ENCODE measurements at regions of chr5 and their contacts with region 1.

Region 1: DNA sequence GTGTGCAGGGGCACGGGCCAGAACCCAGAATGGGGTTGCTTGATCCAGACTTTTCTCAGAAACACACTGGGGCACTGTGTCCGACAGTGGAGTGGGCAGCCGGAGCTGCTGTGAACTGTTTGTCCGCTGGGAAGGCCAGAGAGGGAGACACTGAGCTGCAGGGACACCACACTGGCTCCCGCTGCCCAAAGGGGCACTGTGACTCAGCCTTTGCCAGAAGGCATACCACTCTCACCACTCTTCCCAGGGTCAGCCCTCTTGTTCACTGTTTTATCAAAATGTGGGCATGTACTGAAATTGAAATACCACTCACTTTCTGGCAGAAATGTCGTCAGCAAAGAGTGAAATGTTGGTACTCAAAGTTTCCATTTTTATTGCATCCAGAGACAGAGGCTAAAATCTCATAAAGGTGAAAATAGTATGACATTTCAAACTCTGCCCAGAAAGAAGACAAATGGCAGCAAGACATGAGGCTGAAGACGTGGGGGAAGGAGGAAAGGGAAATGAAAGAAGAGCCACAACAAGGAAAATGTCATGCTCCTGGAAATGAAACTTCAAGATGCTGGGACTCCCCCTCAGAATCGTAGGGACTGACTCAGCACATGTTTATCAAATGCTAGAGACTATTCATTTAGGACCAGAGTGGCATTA is 4.5 kb upstream of the IL7R start:
- DNase-seq: peak; percentile 78
- H3K4me3 Mint-ChIP-seq: peak overlapping the region; percentile 91
- H3K27ac Mint-ChIP-seq: peak overlapping the region; percentile 100
- H3K4me1 Mint-ChIP-seq: peaks cover 63% of the 10 kb centered on the region
- H3K27me3 Mint-ChIP-seq: no peaks in the 10 kb centered on the region

Region 2: GRCh38 chr5:35003018-35003957 is 848.9 kb before region 1 on chr5:
- CTCF ChIA-PET with region 1: no interaction called
- intact Hi-C with region 1: no loop called
- DNase-seq: peak; percentile 76
- H3K4me3 Mint-ChIP-seq: no peak overlapping the region
- H3K27ac Mint-ChIP-seq: no peak overlapping the region
- H3K4me1 Mint-ChIP-seq: no peaks in the 10 kb centered on the region
- H3K27me3 Mint-ChIP-seq: peaks cover 16% of the 10 kb centered on the region

Region 3: GRCh38 chr5:35319333-35320002 is 532.7 kb before region 1 on chr5:
- CTCF ChIA-PET with region 1: no interaction called
- intact Hi-C with region 1: loop called (anchors 1 kb)
- DNase-seq: peak; percentile 94
- H3K4me3 Mint-ChIP-seq: no peak overlapping the region
- H3K27ac Mint-ChIP-seq: peak overlapping the region; percentile 24
- H3K4me1 Mint-ChIP-seq: peaks cover 14% of the 10 kb centered on the region
- H3K27me3 Mint-ChIP-seq: peaks cover 24% of the 10 kb centered on the region

Region 4: GRCh38 chr5:35430376-35431154 is 421.6 kb before region 1 on chr5:
- CTCF ChIA-PET with region 1: no interaction called
- intact Hi-C with region 1: no loop called
- DNase-seq: no peak
- H3K4me3 Mint-ChIP-seq: no peak overlapping the region
- H3K27ac Mint-ChIP-seq: no peak overlapping the region
- H3K4me1 Mint-ChIP-seq: no peaks in the 10 kb centered on the region
- H3K27me3 Mint-ChIP-seq: peaks cover 13% of the 10 kb centered on the region

Region 5: DNA sequence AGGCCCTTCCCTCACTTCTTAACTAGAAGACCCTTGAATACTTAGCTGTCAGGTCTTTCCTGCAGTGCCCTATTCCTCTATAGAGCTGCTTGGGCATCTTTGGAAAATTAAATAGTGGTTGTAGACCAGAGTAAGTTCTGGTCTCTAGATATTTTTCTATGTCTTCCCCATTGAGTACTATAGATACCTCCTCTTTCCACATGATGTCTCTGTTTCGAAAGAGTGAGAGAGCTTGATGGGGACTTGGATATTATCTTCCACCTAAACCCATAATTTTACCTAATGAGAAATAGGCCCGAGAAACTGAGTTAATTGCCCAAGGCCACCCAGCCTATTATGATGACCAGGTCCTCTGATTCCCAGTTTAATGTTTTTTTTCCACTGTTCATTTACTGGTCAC is 194.3 kb before region 1 on chr5:
- CTCF ChIA-PET with region 1: no interaction called
- intact Hi-C with region 1: loop called (anchors 2 kb)
- DNase-seq: no peak
- H3K4me3 Mint-ChIP-seq: no peak overlapping the region
- H3K27ac Mint-ChIP-seq: peak overlapping the region; percentile 21
- H3K4me1 Mint-ChIP-seq: peaks cover 21% of the 10 kb centered on the region
- H3K27me3 Mint-ChIP-seq: no peaks in the 10 kb centered on the region

Region 6: GRCh38 chr5:35777358-35778087 is 74.7 kb before region 1 on chr5:
- CTCF ChIA-PET with region 1: interaction called, 163 read pairs
- intact Hi-C with region 1: loop called (anchors 1 kb)
- DNase-seq: peak; percentile 88
- H3K4me3 Mint-ChIP-seq: peak overlapping the region; percentile 46
- H3K27ac Mint-ChIP-seq: peak overlapping the region; percentile 85
- H3K4me1 Mint-ChIP-seq: peaks cover 74% of the 10 kb centered on the region
- H3K27me3 Mint-ChIP-seq: no peaks in the 10 kb centered on the region

Region 7: GRCh38 chr5:35803191-35803651 is 49.0 kb before region 1 on chr5:
- CTCF ChIA-PET with region 1: no interaction called
- intact Hi-C with region 1: no loop called
- DNase-seq: no peak
- H3K4me3 Mint-ChIP-seq: no peak overlapping the region
- H3K27ac Mint-ChIP-seq: peak overlapping the region; percentile 60
- H3K4me1 Mint-ChIP-seq: peaks cover 75% of the 10 kb centered on the region
- H3K27me3 Mint-ChIP-seq: no peaks in the 10 kb centered on the region

Region 8: DNA sequence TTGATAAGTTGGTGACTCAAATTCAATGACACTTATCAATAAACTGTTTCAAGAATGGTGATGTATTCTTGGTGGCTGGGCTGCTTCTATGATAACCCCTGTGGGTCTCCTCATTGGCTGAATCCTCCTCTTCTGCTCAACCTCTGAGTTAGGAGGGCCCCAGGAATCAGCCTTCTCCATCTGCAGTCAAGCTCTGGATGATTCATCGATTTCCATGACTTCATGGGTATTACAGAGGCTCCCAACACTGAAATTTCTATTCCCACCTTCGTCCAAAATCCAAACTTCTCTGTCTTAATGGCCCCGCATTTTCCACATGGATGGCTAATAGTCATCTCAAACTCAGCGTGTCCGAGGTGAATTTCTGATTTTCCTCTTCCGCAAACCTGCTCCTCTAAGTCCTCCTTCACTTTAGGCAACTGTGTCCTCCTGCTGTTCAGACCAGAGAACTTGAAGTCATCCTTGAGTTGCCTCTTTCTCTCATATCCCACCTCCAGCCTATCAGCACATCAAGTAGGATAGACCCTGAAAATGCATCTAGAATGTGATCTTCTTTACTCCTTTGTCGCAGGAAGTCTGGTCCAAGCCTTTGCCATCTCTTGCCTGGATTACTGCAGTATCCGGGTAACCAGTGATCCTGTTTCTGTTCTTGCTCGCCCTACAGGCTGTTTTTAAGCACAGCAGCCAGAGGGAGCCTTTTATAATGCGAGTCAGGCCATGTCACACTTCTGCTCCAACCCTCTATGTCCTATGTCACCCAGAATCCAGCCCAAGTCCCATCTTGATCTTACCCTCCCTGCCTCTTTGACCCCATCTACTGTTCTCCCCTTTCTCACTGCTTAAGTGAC is 36.9 kb before region 1 on chr5:
- CTCF ChIA-PET with region 1: interaction called, 28 read pairs
- intact Hi-C with region 1: loop called (anchors 1 kb)
- DNase-seq: peak; percentile 76
- H3K4me3 Mint-ChIP-seq: no peak overlapping the region
- H3K27ac Mint-ChIP-seq: no peak overlapping the region
- H3K4me1 Mint-ChIP-seq: peaks cover 45% of the 10 kb centered on the region
- H3K27me3 Mint-ChIP-seq: no peaks in the 10 kb centered on the region

Region 9: GRCh38 chr5:35838370-35839042 is 13.7 kb before region 1 on chr5:
- CTCF ChIA-PET with region 1: interaction called, 12 read pairs
- intact Hi-C with region 1: loop called (anchors 1 kb)
- DNase-seq: no peak
- H3K4me3 Mint-ChIP-seq: no peak overlapping the region
- H3K27ac Mint-ChIP-seq: peak overlapping the region; percentile 95
- H3K4me1 Mint-ChIP-seq: peaks cover 74% of the 10 kb centered on the region
- H3K27me3 Mint-ChIP-seq: no peaks in the 10 kb centered on the region

Region 10: DNA sequence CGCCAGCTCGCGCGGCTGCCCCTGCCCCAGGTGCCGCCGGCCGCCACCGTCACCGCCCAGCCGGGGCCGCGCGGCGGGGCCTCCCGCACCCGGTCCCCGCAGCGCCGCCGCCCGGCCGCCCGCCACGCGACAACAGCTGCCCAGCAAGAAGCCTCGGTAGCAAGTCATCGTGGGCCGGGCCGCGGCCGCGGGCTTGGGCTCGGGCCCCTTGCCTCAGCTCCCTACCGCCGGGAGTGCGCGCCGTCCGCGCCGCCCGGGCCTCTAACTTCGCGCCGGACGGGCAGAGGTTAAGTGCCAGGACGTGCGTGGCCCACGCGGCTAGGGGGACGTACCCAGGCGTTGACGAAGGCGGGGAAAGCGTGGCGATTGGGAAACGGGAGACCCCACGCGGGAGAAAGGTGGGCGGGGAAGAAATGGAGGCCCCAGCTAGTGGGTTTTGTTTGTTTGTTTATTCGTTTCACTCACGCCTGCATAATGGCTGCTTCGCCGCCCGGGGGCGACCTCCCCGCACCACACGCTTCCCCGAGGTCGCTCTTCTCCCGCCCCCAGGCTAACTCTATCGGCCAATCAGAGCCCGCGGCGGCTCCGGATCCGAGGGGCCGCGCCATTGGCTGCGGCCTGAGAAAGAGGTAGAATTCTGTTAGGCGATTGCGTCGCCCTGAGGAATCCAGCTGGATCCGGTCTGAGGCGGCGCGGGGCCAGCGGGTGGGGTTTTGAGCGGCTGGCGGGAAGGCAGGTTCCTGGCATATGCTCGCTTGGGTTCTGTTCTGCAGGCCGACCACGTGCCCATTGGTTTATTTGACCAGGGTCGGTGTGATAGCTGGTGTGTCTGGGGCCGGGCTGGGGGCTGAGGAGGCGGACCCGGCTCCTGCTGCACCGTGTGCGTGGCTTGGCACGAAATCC is 389.7 kb after region 1 on chr5 and contains the start of gene NADK2:
- CTCF ChIA-PET with region 1: no interaction called
- intact Hi-C with region 1: loop called (anchors 5 kb)
- DNase-seq: peak; percentile 96
- H3K4me3 Mint-ChIP-seq: peak within 1 kb of the TSS; percentile 80
- H3K27ac Mint-ChIP-seq: peak within 1 kb of the TSS; percentile 90
- H3K4me1 Mint-ChIP-seq: peaks cover 42% of the 10 kb centered on the region
- H3K27me3 Mint-ChIP-seq: no peaks in the 10 kb centered on the region
- total RNA-seq, gene NADK2: 19.9 to 20.0 TPM

Measured in activated naive CD4-positive, alpha-beta T cell treated with anti-CD3 and anti-CD28 coated beads for 36 hours (primary cell).